Activated B cell treated with CpG ODN at 0.5 μM for 24 hours (primary cell): ENCODE measurements at regions of chr2 and their contacts with region 1.

Region 1: GRCh38 chr2:79929624-79930023 is 374.9 kb downstream of the LRRTM1 start:
- DNase-seq: no peak
- ATAC-seq: no peak
- H3K4me3 Mint-ChIP-seq: no peak overlapping the region
- H3K27ac Mint-ChIP-seq: no peak overlapping the region
- H3K4me1 Mint-ChIP-seq: no peaks in the 10 kb centered on the region
- H3K27me3 Mint-ChIP-seq: no peaks in the 10 kb centered on the region
- CTCF ChIP-seq: no peak

Region 2: GRCh38 chr2:79593237-79593867 is 336.3 kb before region 1 on chr2:
- CTCF ChIA-PET with region 1: no interaction called
- POLR2A ChIA-PET with region 1: no interaction called
- intact Hi-C with region 1: no loop called
- DNase-seq: no peak
- ATAC-seq: no peak
- H3K4me3 Mint-ChIP-seq: no peak overlapping the region
- H3K27ac Mint-ChIP-seq: no peak overlapping the region
- H3K4me1 Mint-ChIP-seq: no peaks in the 10 kb centered on the region
- H3K27me3 Mint-ChIP-seq: no peaks in the 10 kb centered on the region
- CTCF ChIP-seq: no peak

Region 3: DNA sequence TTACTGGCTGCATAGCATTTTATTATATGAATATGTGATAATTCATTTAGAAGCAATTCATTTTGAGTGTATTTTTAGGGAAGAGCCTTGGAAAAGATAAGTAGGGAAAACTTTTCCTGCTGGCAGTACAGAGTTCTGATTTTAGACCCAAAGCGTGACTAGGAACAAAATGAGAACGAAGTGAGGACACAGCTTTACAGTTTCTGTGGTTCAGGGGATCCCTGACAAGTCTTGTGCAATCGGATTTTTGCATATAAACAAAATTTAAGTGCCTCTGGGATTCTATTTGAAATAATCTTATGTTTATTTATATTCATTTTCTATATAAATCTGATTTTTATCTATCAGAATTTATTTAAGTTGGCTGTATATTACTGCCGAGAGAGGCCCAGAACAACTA is 14.2 kb before region 1 on chr2:
- CTCF ChIA-PET with region 1: no interaction called
- POLR2A ChIA-PET with region 1: no interaction called
- intact Hi-C with region 1: loop called (anchors 1 kb)
- DNase-seq: no peak
- ATAC-seq: no peak
- H3K4me3 Mint-ChIP-seq: no peak overlapping the region
- H3K27ac Mint-ChIP-seq: no peak overlapping the region
- H3K4me1 Mint-ChIP-seq: no peaks in the 10 kb centered on the region
- H3K27me3 Mint-ChIP-seq: no peaks in the 10 kb centered on the region
- CTCF ChIP-seq: no peak